ENCODE measurements at regions of chr16 and their contacts with region 1.

Region 1: DNA sequence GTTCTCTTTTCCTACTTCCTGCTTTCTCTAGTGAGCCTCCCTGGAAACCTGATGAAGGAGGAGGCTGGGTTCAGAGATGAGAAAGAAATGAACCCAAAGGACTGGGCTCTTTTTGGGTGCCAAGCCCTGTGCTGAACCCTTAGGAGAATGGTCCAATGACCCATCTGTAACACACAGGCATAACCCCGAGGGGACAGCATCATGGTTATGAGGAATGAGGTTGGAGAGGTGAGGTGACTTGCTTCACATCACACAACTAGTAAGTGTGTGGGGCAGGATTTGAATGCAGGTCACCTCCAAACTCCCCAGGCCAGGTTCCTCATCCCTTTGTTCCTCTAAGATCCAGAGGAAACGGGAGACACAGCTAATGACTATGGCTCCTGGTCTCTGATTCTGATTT is 33.9 kb upstream of the CSNK2A2 start:
- DNase-seq: no peak
- CTCF ChIP-seq: no peak

Region 2: GRCh38 chr16:58243528-58244004 is 11.8 kb after region 1 on chr16:
- CTCF ChIA-PET with region 1: interaction called, 11 read pairs
- POLR2A ChIA-PET with region 1: no interaction called
- DNase-seq: peak; percentile 73
- CTCF ChIP-seq: no peak